Heart right ventricle (tissue), 16 donors: ENCODE measurements at regions of chr20 and their contacts with region 1.

Region 1: DNA sequence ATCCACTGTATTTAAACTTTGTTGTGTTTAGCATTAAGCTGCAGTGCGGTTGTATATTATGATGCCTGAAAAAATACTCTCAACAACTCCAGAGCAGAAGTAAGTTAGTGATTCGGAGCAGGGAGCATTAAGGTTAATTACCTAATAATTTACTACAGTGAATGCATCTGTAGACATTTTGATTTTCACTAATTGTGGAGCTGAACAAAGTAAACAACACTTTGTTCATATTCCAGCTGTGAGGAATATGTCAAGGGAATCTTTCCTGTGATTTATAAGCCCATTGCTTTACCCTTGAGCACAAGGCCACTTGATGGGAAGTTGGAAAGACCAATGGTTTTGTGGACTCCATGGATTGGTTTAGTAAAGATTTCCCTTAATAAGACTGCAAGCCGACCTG is 77.1 kb downstream of the CBLN4 start:
- DNase-seq: no peak
- ATAC-seq: no peak
- H3K4me3 ChIP-seq: no peak overlapping the region
- H3K27ac ChIP-seq: no peak overlapping the region
- H3K4me1 ChIP-seq: no peaks in the 10 kb centered on the region
- H3K27me3 ChIP-seq: peaks cover 0 to 3% (median 0%) of the 10 kb centered on the region in 7 donors
- CTCF ChIP-seq: no peak

Region 2: GRCh38 chr20:55964790-55965189 is 36.5 kb after region 1 on chr20:
- intact Hi-C with region 1: no loop called
- DNase-seq: no peak
- ATAC-seq: no peak
- H3K4me3 ChIP-seq: no peak overlapping the region
- H3K27ac ChIP-seq: no peak overlapping the region
- H3K4me1 ChIP-seq: no peaks in the 10 kb centered on the region
- H3K27me3 ChIP-seq: no peaks in the 10 kb centered on the region
- CTCF ChIP-seq: no peak

Region 3: GRCh38 chr20:55977690-55978459 is 49.6 kb after region 1 on chr20:
- intact Hi-C with region 1: loop called in 1 of 10 experiments (anchors 10 kb)
- DNase-seq: no peak
- ATAC-seq: no peak
- H3K4me3 ChIP-seq: no peak overlapping the region
- H3K27ac ChIP-seq: no peak overlapping the region
- H3K4me1 ChIP-seq: peaks cover 0 to 3% (median 0%) of the 10 kb centered on the region in 9 donors
- H3K27me3 ChIP-seq: peaks cover 0 to 4% (median 0%) of the 10 kb centered on the region in 7 donors
- CTCF ChIP-seq: no peak